MCF 10A (cell line): ENCODE measurements at regions of chr14 and their contacts with region 1.

Region 1: GRCh38 chr14:70827396-70828151 is 18.3 kb upstream of the MAP3K9 start:
- DNase-seq: no peak
- H3K4me3 Mint-ChIP-seq: no peak overlapping the region
- H3K27ac Mint-ChIP-seq: no peak overlapping the region
- H3K4me1 Mint-ChIP-seq: no peaks in the 10 kb centered on the region
- H3K27me3 Mint-ChIP-seq: no peaks in the 10 kb centered on the region
- CTCF ChIP-seq: no peak

Region 2: DNA sequence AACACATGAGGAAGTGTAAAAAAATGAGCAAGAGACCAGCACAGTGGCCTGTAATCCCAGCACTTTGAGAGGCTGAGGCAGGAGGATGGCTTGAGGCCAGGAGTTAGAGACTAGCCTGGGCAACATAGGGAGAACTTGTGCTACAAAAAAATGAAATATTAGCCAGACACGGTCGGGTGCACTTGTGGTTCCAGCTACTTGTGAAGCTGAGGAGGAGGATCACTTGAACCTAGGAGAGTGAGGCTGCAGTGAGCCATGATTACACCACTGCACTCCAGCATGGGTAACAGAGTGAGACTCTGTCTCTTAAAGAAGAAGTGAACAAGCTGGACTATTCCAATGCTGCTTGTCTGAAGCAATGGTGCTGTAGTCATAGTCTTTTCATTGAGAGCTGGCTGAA is 18.0 kb after region 1 on chr14:
- CTCF ChIA-PET with region 1: interaction called, 4 read pairs
- POLR2A ChIA-PET with region 1: interaction called, 3 read pairs
- intact Hi-C with region 1: loop called (anchors 1 kb)
- DNase-seq: no peak
- H3K4me3 Mint-ChIP-seq: no peak overlapping the region
- H3K27ac Mint-ChIP-seq: no peak overlapping the region
- H3K4me1 Mint-ChIP-seq: peaks cover 5% of the 10 kb centered on the region
- H3K27me3 Mint-ChIP-seq: no peaks in the 10 kb centered on the region
- CTCF ChIP-seq: no peak

Region 3: DNA sequence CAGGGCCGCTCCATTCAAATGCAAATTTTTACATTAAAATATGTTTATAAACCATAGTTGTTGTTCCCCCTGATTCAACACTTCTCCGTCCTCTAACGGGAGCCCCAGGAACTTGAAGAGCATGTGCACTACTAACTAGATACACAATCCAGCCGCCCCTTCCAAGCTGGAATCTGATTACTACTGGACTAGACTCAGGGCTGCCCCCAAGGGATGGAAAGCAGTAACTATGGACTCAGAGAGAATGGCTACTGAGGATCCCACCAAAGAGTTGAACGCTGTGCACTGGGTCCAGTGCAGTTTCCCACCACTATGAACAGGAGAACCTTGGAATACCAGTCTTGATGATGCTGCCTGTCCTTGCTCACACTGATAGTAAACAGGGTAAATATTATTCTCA is 31.1 kb after region 1 on chr14:
- CTCF ChIA-PET with region 1: no interaction called
- POLR2A ChIA-PET with region 1: no interaction called
- intact Hi-C with region 1: no loop called
- DNase-seq: no peak
- H3K4me3 Mint-ChIP-seq: no peak overlapping the region
- H3K27ac Mint-ChIP-seq: no peak overlapping the region
- H3K4me1 Mint-ChIP-seq: peaks cover 12% of the 10 kb centered on the region
- H3K27me3 Mint-ChIP-seq: no peaks in the 10 kb centered on the region
- CTCF ChIP-seq: no peak

Region 4: DNA sequence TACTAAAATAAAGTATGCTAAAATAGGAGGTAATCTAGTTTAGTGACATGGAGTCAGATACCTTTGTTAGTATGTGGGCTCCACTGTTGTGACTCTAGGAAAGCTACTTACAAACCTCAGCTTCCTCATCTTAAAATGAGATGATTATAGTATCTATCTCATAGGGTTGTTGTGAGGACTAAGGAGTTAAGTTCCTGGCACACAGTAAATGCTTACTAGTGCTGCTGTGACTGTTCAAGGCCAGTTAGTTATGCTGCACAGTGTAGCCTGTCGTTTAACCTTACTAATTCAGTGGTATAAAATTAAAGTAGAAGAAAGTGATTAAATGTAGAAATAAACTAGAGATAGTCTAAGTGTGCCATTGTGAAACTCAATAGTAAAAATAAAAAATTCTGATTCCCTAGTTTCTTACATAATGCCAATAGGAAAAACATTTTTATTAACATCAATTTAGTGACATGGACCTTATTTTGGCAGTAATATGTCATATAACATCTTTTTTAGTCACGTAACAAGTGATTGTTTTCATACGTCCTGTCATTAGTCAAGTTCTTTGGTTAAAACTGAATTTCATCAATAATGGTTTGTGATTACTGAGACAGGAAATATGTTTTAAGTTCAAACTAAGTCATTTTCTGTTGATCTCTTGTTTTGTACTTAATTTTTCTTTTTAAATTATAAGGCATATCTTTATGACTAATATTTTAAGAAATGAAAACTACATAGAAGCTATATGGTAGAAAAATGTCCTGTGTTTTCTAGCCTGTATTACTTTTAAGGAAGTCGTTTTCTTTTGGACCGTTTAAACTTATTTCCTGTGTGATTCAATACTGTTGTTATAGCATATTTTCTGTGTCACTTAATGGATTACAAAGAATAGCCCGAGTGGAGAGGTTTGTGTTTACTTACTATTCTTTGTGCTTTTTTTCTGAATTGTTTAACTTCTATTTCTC is 153.7 kb after region 1 on chr14:
- CTCF ChIA-PET with region 1: no interaction called
- POLR2A ChIA-PET with region 1: no interaction called
- intact Hi-C with region 1: no loop called
- DNase-seq: no peak
- H3K4me3 Mint-ChIP-seq: no peak overlapping the region
- H3K27ac Mint-ChIP-seq: peak overlapping the region; percentile 12
- H3K4me1 Mint-ChIP-seq: no peaks in the 10 kb centered on the region
- H3K27me3 Mint-ChIP-seq: no peaks in the 10 kb centered on the region
- CTCF ChIP-seq: no peak

Region 5: DNA sequence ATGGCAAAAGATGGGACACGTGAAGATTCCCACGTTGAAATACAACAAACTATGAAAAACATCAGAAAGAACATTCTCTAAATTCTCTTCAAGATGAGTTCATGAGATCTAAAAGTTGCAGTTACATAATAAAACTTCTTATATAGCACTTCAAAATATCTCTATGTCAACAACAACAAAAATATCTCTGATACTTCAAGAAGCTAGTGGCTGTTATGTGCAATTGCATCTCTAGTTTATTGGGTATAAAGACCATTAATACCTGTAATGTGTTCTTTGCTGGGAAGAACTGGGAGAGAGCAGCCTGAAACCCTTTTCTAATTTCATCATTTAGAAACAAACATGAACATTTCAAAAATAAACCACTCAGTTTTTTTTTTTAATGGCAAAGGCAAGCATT is 1035.5 kb after region 1 on chr14:
- CTCF ChIA-PET with region 1: no interaction called
- POLR2A ChIA-PET with region 1: no interaction called
- intact Hi-C with region 1: no loop called
- DNase-seq: no peak
- H3K4me3 Mint-ChIP-seq: no peak overlapping the region
- H3K27ac Mint-ChIP-seq: no peak overlapping the region
- H3K4me1 Mint-ChIP-seq: no peaks in the 10 kb centered on the region
- H3K27me3 Mint-ChIP-seq: peaks cover 47% of the 10 kb centered on the region
- CTCF ChIP-seq: peak; percentile 4